ENCODE measurements at regions of chr2 and their contacts with region 1.

Region 1: GRCh38 chr2:148926291-148926961 is 51.4 kb downstream of the KIF5C start:
- DNase-seq: peak; percentile 58 to 92 (median 72)
- H3K4me3 ChIP-seq: peak overlapping the region in 44 of 59 donors; percentile 1 to 52 (median 28)
- H3K27ac ChIP-seq: peak overlapping the region; percentile 7 to 98 (median 91)
- H3K27me3 ChIP-seq: no peaks in the 10 kb centered on the region
- CTCF ChIP-seq: peak; percentile 50 to 84 (median 71)

Region 2: GRCh38 chr2:148813603-148814065 is 112.8 kb before region 1 on chr2:
- intact Hi-C with region 1: loop called in 1 of 2 experiments (anchors 10 kb)
- DNase-seq: no peak
- H3K4me3 ChIP-seq: no peak overlapping the region
- H3K27ac ChIP-seq: no peak overlapping the region
- H3K27me3 ChIP-seq: no peaks in the 10 kb centered on the region
- CTCF ChIP-seq: no peak

Region 3: GRCh38 chr2:148874868-148875341 is 51.5 kb before region 1 on chr2 and contains the start of gene KIF5C:
- intact Hi-C with region 1: loop called (anchors 1 to 2 kb)
- DNase-seq: peak; percentile 84 to 96 (median 92)
- H3K4me3 ChIP-seq: peak within 1 kb of the TSS; percentile 52 to 97 (median 88)
- H3K27ac ChIP-seq: peak within 1 kb of the TSS; percentile 20 to 94 (median 89)
- H3K27me3 ChIP-seq: no peaks in the 10 kb centered on the region
- CTCF ChIP-seq: peak in 4 of 56 donors; percentile 8 to 19 (median 12)
- total RNA-seq, gene KIF5C: 329 to 792 (median 457) TPM

Region 4: GRCh38 chr2:148981324-148981723 is 54.9 kb after region 1 on chr2:
- intact Hi-C with region 1: loop called (anchors 5 kb)
- DNase-seq: peak in 1 of 10 donors; percentile 50
- H3K4me3 ChIP-seq: no peak overlapping the region
- H3K27ac ChIP-seq: peak overlapping the region in 40 of 59 donors; percentile 5 to 88 (median 64)
- H3K27me3 ChIP-seq: no peaks in the 10 kb centered on the region
- CTCF ChIP-seq: no peak